ENCODE measurements at regions of chrX and their contacts with region 1.

Region 1: DNA sequence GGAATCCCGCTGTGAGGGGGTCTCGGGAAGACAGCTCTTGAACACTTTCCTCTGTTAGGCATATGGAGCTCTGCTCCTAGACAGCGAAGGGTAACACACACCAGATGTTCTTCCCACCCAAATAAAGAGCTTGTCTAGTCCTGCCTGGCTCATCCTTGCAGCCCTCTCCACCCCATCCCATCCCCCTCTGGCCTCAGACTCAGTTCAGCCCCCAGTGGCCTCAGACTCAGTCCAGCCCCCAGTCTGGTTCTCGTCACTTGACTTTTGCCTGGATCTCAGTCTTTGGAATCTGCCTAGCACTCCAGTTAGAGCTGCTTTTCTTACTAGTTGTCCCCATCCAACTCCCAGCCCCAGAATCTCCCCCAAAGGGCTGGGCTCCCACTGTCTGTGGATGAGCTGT is 14.9 kb downstream of the RAB33A start:
- DNase-seq: no peak
- ATAC-seq: no peak
- H3K4me3 ChIP-seq: no peak overlapping the region
- H3K4me3 Mint-ChIP-seq: no peak overlapping the region
- H3K27ac ChIP-seq: no peak overlapping the region
- H3K27ac Mint-ChIP-seq: no peak overlapping the region
- H3K4me1 ChIP-seq: peaks cover 0 to 9% of the 10 kb centered on the region in 2 donors
- H3K4me1 Mint-ChIP-seq: peaks cover 21% of the 10 kb centered on the region
- H3K27me3 ChIP-seq: no peaks in the 10 kb centered on the region
- H3K27me3 Mint-ChIP-seq: no peaks in the 10 kb centered on the region
- CTCF ChIP-seq: no peak

Region 2: DNA sequence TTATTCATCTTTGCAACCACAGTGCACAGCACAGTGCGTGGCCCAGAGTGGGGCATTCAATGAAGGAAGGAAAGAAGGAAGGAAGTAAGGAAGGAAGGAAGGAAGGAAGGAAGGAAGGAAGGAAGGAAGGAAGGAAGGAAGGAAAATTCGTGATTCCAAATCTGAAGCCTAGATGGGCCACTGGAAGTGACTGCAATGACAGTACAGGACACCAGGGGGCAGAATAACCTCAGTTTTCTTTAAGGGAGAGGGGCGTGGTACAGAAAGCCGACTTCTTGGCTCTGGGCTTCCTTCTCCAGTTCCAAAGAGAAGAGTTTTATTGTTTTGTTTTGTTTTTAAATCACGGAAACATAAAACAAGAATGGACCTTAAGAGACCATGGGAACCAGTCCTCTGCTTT is 579.7 kb before region 1 on chrX:
- CTCF ChIA-PET with region 1: no interaction called
- POLR2A ChIA-PET with region 1: no interaction called
- intact Hi-C with region 1: loop called (anchors 5 kb)
- DNase-seq: peak; percentile 68
- ATAC-seq: peak; percentile 63
- H3K4me3 ChIP-seq: no peak overlapping the region
- H3K4me3 Mint-ChIP-seq: no peak overlapping the region
- H3K27ac ChIP-seq: no peak overlapping the region
- H3K27ac Mint-ChIP-seq: no peak overlapping the region
- H3K4me1 ChIP-seq: peaks cover 12 to 15% of the 10 kb centered on the region in 2 donors
- H3K4me1 Mint-ChIP-seq: peaks cover 17% of the 10 kb centered on the region
- H3K27me3 ChIP-seq: no peaks in the 10 kb centered on the region
- H3K27me3 Mint-ChIP-seq: no peaks in the 10 kb centered on the region
- CTCF ChIP-seq: peak; percentile 72

Region 3: GRCh38 chrX:130120746-130121504 is 65.7 kb before region 1 on chrX:
- CTCF ChIA-PET with region 1: interaction called, 11 read pairs
- POLR2A ChIA-PET with region 1: no interaction called
- intact Hi-C with region 1: no loop called
- DNase-seq: peak; percentile 81
- ATAC-seq: peak; percentile 84
- H3K4me3 ChIP-seq: peak overlapping the region in 4 of 5 experiments; percentile 35 to 62 (median 48)
- H3K4me3 Mint-ChIP-seq: peak overlapping the region; percentile 82
- H3K27ac ChIP-seq: no peak overlapping the region
- H3K27ac Mint-ChIP-seq: no peak overlapping the region
- H3K4me1 ChIP-seq: peaks cover 5 to 15% of the 10 kb centered on the region in 2 donors
- H3K4me1 Mint-ChIP-seq: peaks cover 10% of the 10 kb centered on the region
- H3K27me3 ChIP-seq: no peaks in the 10 kb centered on the region
- H3K27me3 Mint-ChIP-seq: no peaks in the 10 kb centered on the region
- CTCF ChIP-seq: peak; percentile 82

Region 4: DNA sequence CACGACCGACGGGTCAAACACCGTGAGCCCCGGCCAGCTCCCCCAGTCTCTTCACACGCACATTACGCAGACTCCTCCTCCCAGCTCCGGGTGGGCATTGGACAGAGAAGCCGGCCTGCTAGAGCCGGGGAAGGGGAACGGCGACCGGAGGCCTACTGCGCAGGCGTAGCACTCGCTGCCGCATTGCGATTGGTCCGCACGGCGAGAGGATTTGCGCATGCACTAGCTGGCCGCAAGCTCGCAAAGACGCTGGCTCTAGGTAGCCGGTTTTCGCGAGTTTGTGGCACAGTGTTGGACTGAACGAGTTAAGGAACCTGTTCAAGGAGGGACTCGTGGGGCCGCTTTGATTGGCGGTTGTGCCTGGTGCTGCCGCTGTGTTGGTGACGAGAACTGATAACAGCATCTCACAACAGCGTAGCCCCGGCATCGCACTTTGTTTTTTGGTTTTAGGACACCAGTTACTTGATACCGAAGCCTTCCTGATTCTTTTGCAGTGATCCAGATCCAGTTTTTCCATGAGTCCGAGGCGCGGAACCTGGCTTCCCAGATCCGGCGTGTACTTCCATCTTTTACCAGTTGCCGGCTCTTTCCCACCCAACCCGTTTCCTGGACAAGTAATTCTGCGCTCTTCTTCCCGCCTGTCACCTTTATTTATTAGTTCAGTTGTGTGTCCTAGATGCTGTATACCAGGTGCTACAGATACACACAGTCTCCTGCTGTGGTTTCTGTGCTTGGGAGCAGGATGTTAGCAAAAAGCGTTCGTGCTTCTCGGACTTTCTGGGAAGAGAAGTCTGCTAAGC is 20.7 kb before region 1 on chrX and contains the start of gene AIFM1:
- CTCF ChIA-PET with region 1: interaction called, 10 read pairs
- POLR2A ChIA-PET with region 1: no interaction called
- intact Hi-C with region 1: no loop called
- DNase-seq: peak; percentile 92
- ATAC-seq: peak; percentile 88
- H3K4me3 ChIP-seq: peak within 1 kb of the TSS; percentile 61 to 76 (median 66)
- H3K4me3 Mint-ChIP-seq: peak within 1 kb of the TSS; percentile 95
- H3K27ac ChIP-seq: peak within 1 kb of the TSS; percentile 54 to 77
- H3K27ac Mint-ChIP-seq: peak within 1 kb of the TSS; percentile 96
- H3K4me1 ChIP-seq: peaks cover 13 to 21% of the 10 kb centered on the region in 2 donors
- H3K4me1 Mint-ChIP-seq: peaks cover 31% of the 10 kb centered on the region
- H3K27me3 ChIP-seq: no peaks in the 10 kb centered on the region
- H3K27me3 Mint-ChIP-seq: no peaks in the 10 kb centered on the region
- CTCF ChIP-seq: no peak
- total RNA-seq, gene AIFM1: 14.8 and 15.9 TPM in 2 replicates

Region 5: DNA sequence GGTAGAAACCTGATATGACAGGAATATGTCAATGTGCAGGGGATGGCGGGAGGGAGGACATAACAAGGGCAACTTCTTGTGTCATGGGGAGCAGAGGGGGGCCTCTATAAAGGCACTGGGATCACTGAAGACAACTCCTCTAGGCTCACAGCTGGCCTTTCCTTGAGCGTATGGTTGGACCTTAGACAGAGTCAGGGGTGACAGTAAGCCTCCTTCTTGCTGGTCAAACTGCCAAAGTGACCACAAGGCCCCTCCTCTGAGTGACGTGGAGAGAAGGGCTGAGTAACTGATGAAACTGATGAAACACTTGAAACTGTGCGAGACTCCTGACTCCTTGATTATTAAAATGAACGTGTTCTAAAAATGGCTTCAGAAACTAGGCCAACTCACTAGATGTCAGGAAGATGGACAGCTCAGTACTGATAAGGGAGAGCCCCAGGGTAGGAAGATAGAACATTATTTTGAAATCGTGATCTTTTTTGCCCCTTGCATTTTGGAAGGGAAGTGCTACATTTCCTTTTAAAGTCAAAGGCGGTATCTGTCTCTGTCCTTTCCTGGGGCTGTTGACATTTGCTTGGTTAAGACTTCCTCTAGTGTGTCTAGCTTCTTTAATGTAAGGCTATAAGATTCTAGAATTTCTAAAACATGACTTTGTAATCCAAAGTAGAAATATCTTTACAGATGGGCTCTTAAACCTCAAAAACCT is 13.3 kb before region 1 on chrX:
- CTCF ChIA-PET with region 1: interaction called, 15 read pairs
- POLR2A ChIA-PET with region 1: interaction called, 5 read pairs
- intact Hi-C with region 1: no loop called
- DNase-seq: peak; percentile 19
- ATAC-seq: no peak
- H3K4me3 ChIP-seq: peak overlapping the region in 3 of 5 experiments; percentile 64 to 74 (median 72)
- H3K4me3 Mint-ChIP-seq: peak overlapping the region; percentile 91
- H3K27ac ChIP-seq: peak overlapping the region in 1 of 2 donors; percentile 66
- H3K27ac Mint-ChIP-seq: peak overlapping the region; percentile 86
- H3K4me1 ChIP-seq: peaks cover 37 to 62% of the 10 kb centered on the region in 2 donors
- H3K4me1 Mint-ChIP-seq: peaks cover 62% of the 10 kb centered on the region
- H3K27me3 ChIP-seq: no peaks in the 10 kb centered on the region
- H3K27me3 Mint-ChIP-seq: no peaks in the 10 kb centered on the region
- CTCF ChIP-seq: no peak

Measured in B cell (primary cell).